ENCODE measurements at regions of chr4 and their contacts with region 1.

Region 1: GRCh38 chr4:106315968-106316772 is at the starts of genes AIMP1 and TBCK:
- DNase-seq: peak; percentile 74 to 92 (median 88)
- ATAC-seq: peak; percentile 93
- H3K4me3 ChIP-seq: peak within 1 kb of the TSS; percentile 95
- H3K4me3 Mint-ChIP-seq: no peak within 1 kb of the TSS
- H3K27ac ChIP-seq: peak within 1 kb of the TSS; percentile 90
- H3K27ac Mint-ChIP-seq: no peak within 1 kb of the TSS
- H3K4me1 ChIP-seq: peaks cover 22 to 24% of the 10 kb centered on the region in 2 donors
- H3K4me1 Mint-ChIP-seq: peaks cover 23 to 50% (median 43%) of the 10 kb centered on the region in 7 donors
- H3K27me3 ChIP-seq: no peaks in the 10 kb centered on the region
- H3K27me3 Mint-ChIP-seq: no peaks in the 10 kb centered on the region
- total RNA-seq, gene AIMP1: 44.2 to 59.2 (median 56.8) TPM
- total RNA-seq, gene TBCK: 41.3 to 70.7 (median 60.7) TPM

Region 2: DNA sequence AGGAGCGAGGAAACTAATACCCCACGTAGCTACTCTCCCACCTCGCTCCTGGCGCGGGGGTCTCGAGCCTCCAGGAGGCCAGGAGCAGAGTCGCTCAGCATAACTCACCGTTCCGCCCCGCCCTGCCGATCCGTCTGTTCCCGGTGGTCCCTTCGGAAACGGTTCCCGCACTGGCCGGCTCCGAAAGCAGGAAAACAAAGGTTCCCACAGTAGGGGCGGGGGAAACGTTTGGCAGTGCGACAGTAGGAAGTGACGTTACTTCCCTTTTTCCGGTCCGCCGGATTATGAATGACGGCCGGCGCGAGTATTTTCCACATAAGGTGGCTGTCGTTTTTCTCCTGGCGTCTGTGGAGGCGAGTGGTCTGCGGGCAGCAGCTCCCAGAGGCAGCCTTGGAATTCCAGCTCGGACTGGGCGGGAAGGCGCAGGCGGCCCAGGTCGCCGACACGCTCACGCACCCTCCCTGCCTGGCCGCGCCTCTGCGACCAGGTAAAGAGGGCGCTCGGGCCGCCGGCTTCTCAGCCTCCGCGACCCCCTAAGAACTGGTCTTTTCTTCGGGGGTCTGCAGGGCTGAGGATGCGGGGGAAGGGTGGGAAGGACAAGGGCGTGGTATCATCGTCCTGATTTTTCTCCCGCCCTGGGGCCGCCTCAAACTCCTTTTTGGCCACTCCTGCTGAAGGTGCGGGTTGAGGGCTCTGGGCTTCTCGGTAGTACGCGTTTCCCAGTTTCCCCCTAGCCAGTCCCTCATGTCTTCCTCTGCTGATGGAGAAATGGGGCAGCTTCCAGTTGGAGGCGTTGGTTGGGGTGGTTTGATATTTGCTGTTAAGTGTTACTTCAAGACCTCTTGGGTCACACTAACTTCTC is 607.4 kb before region 1 on chr4 and contains the starts of genes GSTCD and INTS12:
- CTCF ChIA-PET with region 1: no interaction called
- POLR2A ChIA-PET with region 1: interaction called, 4 read pairs
- intact Hi-C with region 1: loop called (anchors 1 kb)
- DNase-seq: peak; percentile 73 to 88 (median 84)
- ATAC-seq: peak; percentile 98
- H3K4me3 ChIP-seq: peak within 1 kb of the TSS; percentile 92
- H3K4me3 Mint-ChIP-seq: peak within 1 kb of the TSS; percentile 94 to 100 (median 99)
- H3K27ac ChIP-seq: peak within 1 kb of the TSS; percentile 84
- H3K27ac Mint-ChIP-seq: peak within 1 kb of the TSS; percentile 92 to 100 (median 97)
- H3K4me1 ChIP-seq: peaks cover 7 to 10% of the 10 kb centered on the region in 2 donors
- H3K4me1 Mint-ChIP-seq: peaks cover 10 to 40% (median 27%) of the 10 kb centered on the region in 7 donors
- H3K27me3 ChIP-seq: no peaks in the 10 kb centered on the region
- H3K27me3 Mint-ChIP-seq: no peaks in the 10 kb centered on the region
- total RNA-seq, gene GSTCD: 5.8 to 9.2 (median 7.5) TPM
- total RNA-seq, gene INTS12: 14.8 to 20.4 (median 17.6) TPM

Region 3: GRCh38 chr4:106238820-106239420 is 77.2 kb before region 1 on chr4:
- CTCF ChIA-PET with region 1: no interaction called
- POLR2A ChIA-PET with region 1: no interaction called
- intact Hi-C with region 1: loop called in 1 of 2 experiments (anchors 5 kb)
- DNase-seq: peak in 3 of 9 donors; percentile 1 to 16 (median 5)
- ATAC-seq: peak; percentile 51
- H3K4me3 ChIP-seq: no peak overlapping the region
- H3K4me3 Mint-ChIP-seq: no peak overlapping the region
- H3K27ac ChIP-seq: no peak overlapping the region
- H3K27ac Mint-ChIP-seq: no peak overlapping the region
- H3K4me1 ChIP-seq: no peaks in the 10 kb centered on the region
- H3K4me1 Mint-ChIP-seq: no peaks in the 10 kb centered on the region
- H3K27me3 ChIP-seq: no peaks in the 10 kb centered on the region
- H3K27me3 Mint-ChIP-seq: no peaks in the 10 kb centered on the region

Region 4: DNA sequence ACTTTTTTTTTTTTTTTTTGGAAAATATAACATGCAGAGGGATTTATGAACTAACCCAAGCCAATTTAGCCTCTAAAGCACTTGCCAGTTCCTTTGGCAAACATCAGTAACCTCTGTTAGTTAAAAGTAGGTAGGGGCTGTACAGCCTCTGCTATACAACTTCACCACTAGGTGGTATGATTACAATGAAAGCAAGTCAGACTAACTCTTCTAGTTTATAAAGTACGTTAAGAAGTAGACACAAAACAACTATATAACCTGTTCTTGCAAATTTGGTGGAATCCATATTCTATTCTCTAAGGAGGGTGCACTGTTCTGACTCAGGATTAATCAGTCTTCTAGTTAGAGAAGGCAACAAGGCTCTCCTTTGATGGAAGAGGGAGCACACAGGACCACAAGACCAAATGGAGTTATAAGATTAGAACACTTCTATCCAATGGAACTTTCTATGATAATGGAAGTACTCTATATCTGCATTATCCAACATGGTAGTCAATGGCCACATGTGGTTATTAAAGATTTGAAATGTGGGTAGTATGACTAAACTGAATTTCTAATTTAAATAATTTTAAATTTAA is 13.0 kb after region 1 on chr4:
- CTCF ChIA-PET with region 1: no interaction called
- POLR2A ChIA-PET with region 1: interaction called, 3 read pairs
- intact Hi-C with region 1: loop called in 1 of 2 experiments (anchors 1 kb)
- DNase-seq: peak in 3 of 9 donors; percentile 7 to 19 (median 18)
- ATAC-seq: peak; percentile 77
- H3K4me3 ChIP-seq: no peak overlapping the region
- H3K4me3 Mint-ChIP-seq: no peak overlapping the region
- H3K27ac ChIP-seq: no peak overlapping the region
- H3K27ac Mint-ChIP-seq: peak overlapping the region in 1 of 9 donors; percentile 52
- H3K4me1 ChIP-seq: no peaks in the 10 kb centered on the region
- H3K4me1 Mint-ChIP-seq: peaks cover 0 to 24% (median 13%) of the 10 kb centered on the region in 7 donors
- H3K27me3 ChIP-seq: no peaks in the 10 kb centered on the region
- H3K27me3 Mint-ChIP-seq: no peaks in the 10 kb centered on the region

Region 5: DNA sequence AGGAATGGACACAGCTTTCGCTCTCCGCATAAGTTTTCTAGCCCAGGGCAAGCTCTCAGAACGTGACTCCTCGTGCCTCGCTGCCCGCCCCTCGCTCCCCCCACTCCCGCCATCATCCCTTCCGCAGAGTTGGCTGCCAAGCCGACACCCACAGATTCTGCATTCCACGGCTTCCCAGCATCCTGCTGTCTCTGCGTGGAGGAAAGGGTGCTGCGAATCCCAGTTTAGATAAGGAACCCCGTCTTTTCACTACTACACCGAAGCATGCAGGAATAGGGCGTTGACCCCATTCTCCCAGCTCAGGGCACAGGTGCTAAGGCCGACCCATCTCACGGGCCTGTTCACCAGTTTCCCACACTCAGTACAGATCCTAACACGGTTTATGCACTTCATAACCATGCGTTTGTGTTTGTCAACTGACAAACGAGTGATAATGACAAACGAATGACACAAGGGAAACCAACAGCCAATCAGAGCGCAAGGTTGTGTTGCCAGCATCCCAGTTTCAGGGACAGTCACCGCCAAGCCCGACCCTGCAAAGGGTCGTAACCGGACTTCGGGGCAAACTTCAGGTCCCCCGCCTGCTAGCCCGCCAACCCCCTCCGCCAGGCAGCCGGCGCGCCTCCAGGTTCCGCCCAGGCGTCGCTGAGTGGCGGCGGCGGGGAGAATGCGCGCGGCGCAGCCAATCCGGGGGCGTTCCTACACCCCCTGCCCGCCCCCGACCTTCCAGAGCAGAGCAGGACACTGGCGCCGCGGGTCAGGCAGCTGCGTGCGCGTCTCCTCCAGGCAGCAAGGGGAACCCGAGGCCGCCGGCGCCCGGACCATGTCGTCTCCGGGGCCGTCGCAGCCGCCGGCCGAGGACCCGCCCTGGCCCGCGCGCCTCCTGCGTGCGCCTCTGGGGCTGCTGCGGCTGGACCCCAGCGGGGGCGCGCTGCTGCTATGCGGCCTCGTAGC is 1614.9 kb after region 1 on chr4 and contains the start of gene CYP2U1:
- CTCF ChIA-PET with region 1: no interaction called
- POLR2A ChIA-PET with region 1: no interaction called
- intact Hi-C with region 1: loop called in 1 of 2 experiments (anchors 5 kb)
- DNase-seq: peak; percentile 74 to 84 (median 81)
- ATAC-seq: peak; percentile 96
- H3K4me3 ChIP-seq: peak within 1 kb of the TSS; percentile 86
- H3K4me3 Mint-ChIP-seq: peak within 1 kb of the TSS; percentile 90 to 98 (median 92)
- H3K27ac ChIP-seq: peak within 1 kb of the TSS; percentile 71
- H3K27ac Mint-ChIP-seq: peak within 1 kb of the TSS; percentile 65 to 98 (median 88)
- H3K4me1 ChIP-seq: peaks cover 8 to 12% of the 10 kb centered on the region in 2 donors
- H3K4me1 Mint-ChIP-seq: peaks cover 21 to 50% (median 35%) of the 10 kb centered on the region in 7 donors
- H3K27me3 ChIP-seq: no peaks in the 10 kb centered on the region
- H3K27me3 Mint-ChIP-seq: peaks cover 0 to 17% (median 0%) of the 10 kb centered on the region in 5 donors
- total RNA-seq, gene CYP2U1: 3.8 to 11.4 (median 5.8) TPM